Natural killer cell (primary cell): ENCODE measurements at regions of chr21 and their contacts with region 1.

Region 1: GRCh38 chr21:42062236-42063022 is 8.7 kb upstream of the UMODL1 start:
- DNase-seq: peak; percentile 62 to 95
- ATAC-seq: peak; percentile 86 to 90 (median 89)
- H3K4me3 ChIP-seq: peak overlapping the region; percentile 24
- H3K4me3 Mint-ChIP-seq: peak overlapping the region; percentile 88
- H3K27ac ChIP-seq: peak overlapping the region; percentile 71
- H3K27ac Mint-ChIP-seq: peak overlapping the region; percentile 46 to 86
- H3K4me1 ChIP-seq: peaks cover 45% of the 10 kb centered on the region
- H3K4me1 Mint-ChIP-seq: peaks cover 30 to 38% of the 10 kb centered on the region in 2 donors
- H3K27me3 ChIP-seq: peaks cover 11% of the 10 kb centered on the region
- H3K27me3 Mint-ChIP-seq: peaks cover 44 to 69% of the 10 kb centered on the region in 2 donors
- CTCF ChIP-seq: no peak

Region 2: GRCh38 chr21:42009831-42010523 is 52.5 kb before region 1 on chr21 and contains the start of gene ZBTB21:
- intact Hi-C with region 1: loop called (anchors 1 kb)
- DNase-seq: peak; percentile 96 to 100
- ATAC-seq: peak; percentile 75 to 89 (median 79)
- H3K4me3 ChIP-seq: peak within 1 kb of the TSS; percentile 97
- H3K4me3 Mint-ChIP-seq: peak within 1 kb of the TSS; percentile 94
- H3K27ac ChIP-seq: peak within 1 kb of the TSS; percentile 100
- H3K27ac Mint-ChIP-seq: peak within 1 kb of the TSS; percentile 95 to 98
- H3K4me1 ChIP-seq: peaks cover 15% of the 10 kb centered on the region
- H3K4me1 Mint-ChIP-seq: peaks cover 6 to 20% of the 10 kb centered on the region in 2 donors
- H3K27me3 ChIP-seq: no peaks in the 10 kb centered on the region
- H3K27me3 Mint-ChIP-seq: peaks cover 0 to 11% of the 10 kb centered on the region in 2 donors
- CTCF ChIP-seq: no peak
- total RNA-seq, gene ZBTB21: 78.2 to 113 (median 100) TPM

Region 3: GRCh38 chr21:42097860-42098454 is 35.5 kb after region 1 on chr21:
- intact Hi-C with region 1: no loop called
- DNase-seq: no peak
- ATAC-seq: peak in 2 of 3 donors; percentile 20 to 44
- H3K4me3 ChIP-seq: no peak overlapping the region
- H3K4me3 Mint-ChIP-seq: no peak overlapping the region
- H3K27ac ChIP-seq: no peak overlapping the region
- H3K27ac Mint-ChIP-seq: no peak overlapping the region
- H3K4me1 ChIP-seq: no peaks in the 10 kb centered on the region
- H3K4me1 Mint-ChIP-seq: no peaks in the 10 kb centered on the region
- H3K27me3 ChIP-seq: no peaks in the 10 kb centered on the region
- H3K27me3 Mint-ChIP-seq: peaks cover 15 to 30% of the 10 kb centered on the region in 2 donors
- CTCF ChIP-seq: no peak